ENCODE measurements at regions of chr11 and their contacts with region 1.

Region 1: DNA sequence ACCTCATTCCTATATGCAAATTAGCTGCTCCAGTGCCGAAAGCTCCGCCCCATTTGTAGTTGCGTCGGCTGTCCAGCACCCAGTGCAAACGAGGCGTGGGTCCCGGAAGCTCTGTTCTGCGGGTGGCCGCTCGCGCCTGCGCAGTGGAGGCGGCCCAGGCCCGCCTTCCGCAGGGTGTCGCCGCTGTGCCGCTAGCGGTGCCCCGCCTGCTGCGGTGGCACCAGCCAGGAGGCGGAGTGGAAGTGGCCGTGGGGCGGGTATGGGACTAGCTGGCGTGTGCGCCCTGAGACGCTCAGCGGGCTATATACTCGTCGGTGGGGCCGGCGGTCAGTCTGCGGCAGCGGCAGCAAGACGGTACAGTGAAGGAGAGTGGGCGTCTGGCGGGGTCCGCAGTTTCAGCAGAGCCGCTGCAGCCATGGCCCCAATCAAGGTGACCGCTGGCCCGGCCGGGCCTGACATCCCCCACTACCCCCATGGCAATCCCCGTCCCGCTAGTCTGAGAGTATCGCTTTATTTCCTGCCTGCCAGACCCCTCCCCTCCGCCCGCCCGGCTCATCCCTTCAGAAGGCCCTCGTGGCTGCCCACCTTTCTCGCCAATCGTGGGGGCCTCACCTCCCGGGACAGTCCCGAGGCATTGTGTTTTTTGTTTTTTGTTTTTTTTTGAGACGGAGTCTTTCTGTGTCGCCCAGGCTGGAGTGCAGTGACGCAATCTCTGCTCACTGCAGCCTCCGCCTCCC is at the start of gene PRDX5:
- DNase-seq: peak; percentile 92 to 99
- H3K4me3 ChIP-seq: peak within 1 kb of the TSS; percentile 69
- H3K27ac ChIP-seq: peak within 1 kb of the TSS; percentile 87
- H3K4me1 ChIP-seq: peaks cover 47% of the 10 kb centered on the region
- H3K27me3 ChIP-seq: no peaks in the 10 kb centered on the region
- CTCF ChIP-seq: peak; percentile 39; the same call in 1 of the 2 replicates
- total RNA-seq, gene PRDX5: 381 and 441 TPM in 2 replicates

Region 2: DNA sequence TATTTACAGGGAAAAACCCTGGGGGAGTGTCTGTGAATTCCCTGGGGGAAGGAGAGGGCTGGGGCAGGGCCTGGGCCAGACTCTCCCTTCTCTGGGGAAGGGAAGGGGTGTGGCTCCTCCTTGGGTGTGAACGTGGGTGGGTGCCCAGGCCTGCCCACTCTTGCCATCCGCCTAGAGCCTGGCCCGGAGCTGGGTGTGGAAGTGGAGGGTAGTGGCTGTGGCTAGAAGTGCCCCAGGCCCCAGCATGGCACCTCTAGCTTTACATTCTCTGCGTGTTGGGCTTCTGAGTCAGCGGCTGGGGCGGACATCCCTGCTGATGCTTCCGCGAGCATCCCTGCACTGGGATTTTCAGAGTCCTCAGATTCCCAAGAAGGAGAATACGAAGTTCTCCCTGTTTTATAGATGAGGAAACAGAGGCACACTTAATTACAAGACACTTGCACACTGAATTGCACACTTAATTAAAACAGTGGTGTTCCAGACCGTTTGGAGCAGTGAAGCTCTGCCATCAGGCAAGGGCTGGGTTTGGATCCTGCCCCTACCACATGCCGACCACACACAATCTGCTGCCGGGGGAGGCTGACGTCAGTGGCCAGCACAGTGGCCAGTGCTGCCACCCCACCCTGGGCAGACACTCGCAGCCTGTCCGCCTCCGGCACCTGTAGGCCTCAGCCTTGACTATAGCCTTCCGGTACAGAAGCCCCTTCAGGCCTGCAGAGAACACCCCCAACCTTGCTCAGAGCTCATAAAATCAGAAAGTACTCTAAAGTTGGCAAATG is 41.3 kb before region 1 on chr11:
- CTCF ChIA-PET with region 1: interaction called, 13 read pairs
- POLR2A ChIA-PET with region 1: interaction called, 4 read pairs
- intact Hi-C with region 1: no loop called
- DNase-seq: peak; percentile 85 to 97
- H3K4me3 ChIP-seq: no peak overlapping the region
- H3K27ac ChIP-seq: peak overlapping the region; percentile 41
- H3K4me1 ChIP-seq: peaks cover 28% of the 10 kb centered on the region
- H3K27me3 ChIP-seq: no peaks in the 10 kb centered on the region
- CTCF ChIP-seq: no peak

Region 3: DNA sequence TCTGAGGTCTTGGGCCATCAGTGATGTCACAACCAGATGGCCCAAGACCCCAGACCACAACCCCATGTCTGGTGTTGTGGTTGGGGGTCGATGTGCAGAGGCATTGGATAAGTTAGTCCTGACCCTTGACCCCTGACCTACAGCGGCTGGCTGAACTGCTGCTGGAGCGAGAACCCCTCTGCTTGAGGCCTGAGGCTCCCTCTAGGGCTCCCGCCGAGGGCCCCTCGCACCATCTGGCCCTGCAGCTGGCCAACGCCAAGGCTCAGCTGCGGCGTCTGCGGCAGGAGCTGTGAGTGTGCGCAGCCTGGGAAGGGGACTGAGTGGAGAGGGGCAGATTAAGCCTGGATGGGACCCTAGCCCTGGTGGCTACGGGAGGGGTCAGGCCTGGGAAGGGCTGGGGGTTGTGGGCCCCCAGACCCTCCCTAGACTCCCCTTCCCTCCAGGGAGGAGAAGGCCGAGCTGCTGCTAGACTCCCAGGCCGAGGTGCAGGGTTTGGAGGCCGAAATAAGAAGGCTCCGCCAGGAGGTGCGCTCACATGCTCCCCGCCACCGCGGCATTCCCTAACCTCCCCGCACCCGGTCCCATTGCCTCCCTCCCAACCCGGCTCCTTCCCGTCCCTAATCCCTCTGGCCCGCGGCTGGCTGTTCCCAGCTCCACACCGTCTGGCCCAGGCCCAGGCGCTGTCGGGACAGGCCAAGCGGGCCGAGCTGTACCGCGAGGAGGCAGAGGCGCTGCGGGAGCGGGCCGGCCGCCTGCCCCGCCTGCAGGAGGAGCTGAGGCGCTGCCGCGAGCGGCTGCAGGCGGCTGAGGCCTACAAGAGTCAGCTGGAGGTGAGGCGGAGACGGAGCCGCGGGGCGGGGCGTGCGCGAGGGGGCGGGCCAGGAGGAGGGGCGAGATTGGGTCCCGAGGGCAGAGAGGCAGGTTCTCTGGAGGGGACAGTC is 24.0 kb after region 1 on chr11:
- CTCF ChIA-PET with region 1: interaction called, 12 read pairs
- POLR2A ChIA-PET with region 1: interaction called, 3 read pairs
- intact Hi-C with region 1: loop called (anchors 1 kb)
- DNase-seq: peak; percentile 83 to 98
- H3K4me3 ChIP-seq: peak overlapping the region; percentile 49; the same call in 1 of the 2 replicates
- H3K27ac ChIP-seq: no peak overlapping the region
- H3K4me1 ChIP-seq: peaks cover 16% of the 10 kb centered on the region
- H3K27me3 ChIP-seq: no peaks in the 10 kb centered on the region
- CTCF ChIP-seq: peak; percentile 58; the same call in 1 of the 2 replicates

Region 4: DNA sequence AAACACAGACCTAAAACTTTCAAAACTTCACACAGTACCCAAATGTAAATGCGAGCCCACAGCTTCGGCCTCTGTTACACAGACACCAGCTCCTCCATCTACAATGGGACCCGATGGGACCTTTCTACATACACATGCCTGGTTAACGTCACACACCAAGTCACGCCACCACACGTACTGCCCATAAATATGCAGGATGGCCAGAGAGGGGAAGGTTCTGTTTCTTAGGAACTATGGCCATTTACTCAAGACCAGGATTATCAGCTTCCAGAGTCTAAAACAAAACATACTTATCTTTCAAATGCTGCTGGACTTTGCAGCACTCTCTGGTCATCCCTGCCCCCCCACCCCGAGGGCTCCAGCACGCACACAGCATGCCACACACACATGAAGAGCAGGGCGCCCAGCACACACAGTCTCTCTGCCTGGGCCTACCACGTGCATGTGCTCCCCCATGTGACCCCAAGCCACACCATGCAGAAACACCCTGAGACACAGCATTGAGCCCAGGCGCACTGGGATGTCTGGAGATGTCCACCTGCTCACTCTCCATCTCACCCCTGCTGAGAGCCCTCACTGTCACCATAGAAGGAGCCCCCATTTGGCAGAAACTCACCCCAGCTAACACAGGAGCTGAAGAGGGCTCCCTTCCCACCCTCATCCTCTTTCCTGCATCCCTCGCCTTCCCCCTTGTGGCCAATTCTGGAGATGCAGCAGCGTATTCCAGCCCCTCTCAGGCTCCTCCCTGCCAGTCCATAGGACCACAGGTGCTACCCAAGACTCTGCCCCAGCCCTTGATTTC is 334.7 kb after region 1 on chr11:
- CTCF ChIA-PET with region 1: interaction called, 3 read pairs
- POLR2A ChIA-PET with region 1: no interaction called
- intact Hi-C with region 1: loop called (anchors 2 kb)
- DNase-seq: peak; percentile 46 to 88
- H3K4me3 ChIP-seq: no peak overlapping the region
- H3K27ac ChIP-seq: no peak overlapping the region
- H3K4me1 ChIP-seq: peaks cover 17% of the 10 kb centered on the region
- H3K27me3 ChIP-seq: no peaks in the 10 kb centered on the region
- CTCF ChIP-seq: peak; percentile 97